ENCODE measurements at regions of chr20 and their contacts with region 1.

Region 1: GRCh38 chr20:62668441-62669027 is 26.2 kb downstream of the SLCO4A1 start:
- DNase-seq: peak; percentile 77
- H3K4me3 ChIP-seq: no peak overlapping the region
- H3K27ac ChIP-seq: no peak overlapping the region
- H3K4me1 ChIP-seq: peaks cover 13% of the 10 kb centered on the region
- H3K27me3 ChIP-seq: no peaks in the 10 kb centered on the region
- CTCF ChIP-seq: peak; percentile 71

Region 2: DNA sequence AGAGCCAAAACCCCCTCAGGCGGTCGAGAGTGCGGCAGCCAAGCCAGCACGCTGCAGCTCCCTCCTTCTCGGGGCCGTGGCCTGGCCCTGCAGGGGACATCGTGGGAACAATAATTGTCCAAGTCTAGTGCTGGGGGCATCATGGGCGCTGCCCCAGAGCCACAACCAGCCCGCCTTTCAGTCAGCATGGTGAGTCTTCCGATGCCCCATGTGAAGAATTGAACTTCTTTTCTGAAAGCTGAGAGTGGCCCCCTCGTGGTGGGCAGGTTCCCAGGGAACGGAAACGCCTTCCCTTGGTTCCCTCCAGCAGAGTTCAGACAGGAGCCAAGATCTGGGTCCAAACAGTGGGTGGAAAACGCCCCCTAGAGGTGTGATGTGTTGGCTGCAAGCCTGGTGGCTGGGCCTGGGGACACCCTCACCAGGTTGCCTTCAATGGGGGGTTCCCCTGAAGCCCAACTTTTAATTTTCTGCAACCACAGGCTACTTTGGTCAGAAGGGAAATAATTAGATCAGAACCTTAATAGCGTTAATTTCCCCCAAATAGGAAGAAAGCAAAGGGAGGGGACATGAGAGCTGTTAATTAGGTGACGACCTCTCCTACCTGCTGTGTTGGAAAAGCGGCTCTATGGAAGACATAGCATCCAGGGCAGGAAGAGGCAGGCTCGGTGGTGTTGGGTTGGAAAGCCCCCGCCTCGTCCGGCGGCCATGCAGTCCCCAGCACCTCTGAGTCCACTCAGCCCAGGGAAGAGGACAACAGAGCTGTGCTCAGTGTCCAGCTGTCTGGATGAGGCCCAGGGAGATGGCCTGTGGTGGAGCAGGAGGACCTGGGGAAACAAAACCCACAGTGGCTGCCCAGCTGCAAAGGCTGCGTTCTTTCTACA is 123.0 kb after region 1 on chr20:
- intact Hi-C with region 1: loop called (anchors 2 kb)
- DNase-seq: peak; percentile 82
- H3K4me3 ChIP-seq: no peak overlapping the region
- H3K27ac ChIP-seq: no peak overlapping the region
- H3K4me1 ChIP-seq: peaks cover 4% of the 10 kb centered on the region
- H3K27me3 ChIP-seq: no peaks in the 10 kb centered on the region
- CTCF ChIP-seq: peak; percentile 89

Region 3: GRCh38 chr20:62808211-62808865 is 139.8 kb after region 1 on chr20:
- intact Hi-C with region 1: loop called (anchors 5 kb)
- DNase-seq: peak; percentile 72
- H3K4me3 ChIP-seq: no peak overlapping the region
- H3K27ac ChIP-seq: no peak overlapping the region
- H3K4me1 ChIP-seq: peaks cover 14% of the 10 kb centered on the region
- H3K27me3 ChIP-seq: no peaks in the 10 kb centered on the region
- CTCF ChIP-seq: peak; percentile 92

Measured in colonic mucosa (tissue), 4 donors.